MCF 10A (cell line): ENCODE measurements at regions of chr17 and their contacts with region 1.

Region 1: GRCh38 chr17:30970831-30971567 is at the start of gene RNF135:
- DNase-seq: peak; percentile 94
- H3K4me3 Mint-ChIP-seq: peak within 1 kb of the TSS; percentile 99
- H3K27ac Mint-ChIP-seq: peak within 1 kb of the TSS; percentile 99
- H3K4me1 Mint-ChIP-seq: peaks cover 11% of the 10 kb centered on the region
- H3K27me3 Mint-ChIP-seq: no peaks in the 10 kb centered on the region
- CTCF ChIP-seq: no peak
- total RNA-seq, gene RNF135: 20.1 and 31.0 TPM in 2 replicates

Region 2: GRCh38 chr17:30796016-30796415 is 175.0 kb before region 1 on chr17:
- CTCF ChIA-PET with region 1: no interaction called
- POLR2A ChIA-PET with region 1: no interaction called
- intact Hi-C with region 1: no loop called
- DNase-seq: no peak
- H3K4me3 Mint-ChIP-seq: no peak overlapping the region
- H3K27ac Mint-ChIP-seq: no peak overlapping the region
- H3K4me1 Mint-ChIP-seq: no peaks in the 10 kb centered on the region
- H3K27me3 Mint-ChIP-seq: no peaks in the 10 kb centered on the region
- CTCF ChIP-seq: no peak

Region 3: DNA sequence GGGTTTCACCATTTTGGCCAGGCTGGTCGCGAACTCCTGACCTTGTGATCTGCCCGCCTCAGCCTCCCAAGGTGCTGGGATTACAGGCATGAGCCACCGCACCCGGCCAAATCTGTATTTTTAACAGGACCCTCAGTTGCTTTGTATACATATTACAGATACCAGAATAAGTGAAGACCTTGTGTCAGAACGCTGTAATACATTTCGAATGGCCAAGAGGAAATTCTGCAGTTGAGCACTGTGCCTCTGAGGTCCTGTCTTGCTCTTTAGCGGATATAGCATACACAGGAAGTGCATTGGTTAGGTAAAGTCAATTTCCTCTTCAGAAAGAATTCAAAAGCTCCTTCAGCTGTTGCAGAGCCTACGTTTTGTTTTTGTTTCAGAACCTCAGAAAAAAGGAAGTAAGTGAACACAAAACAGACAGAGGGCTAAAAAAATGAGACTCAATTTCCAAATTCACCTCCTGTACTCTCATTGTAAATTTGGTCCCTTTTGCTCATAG is 162.2 kb before region 1 on chr17:
- CTCF ChIA-PET with region 1: no interaction called
- POLR2A ChIA-PET with region 1: no interaction called
- intact Hi-C with region 1: no loop called
- DNase-seq: no peak
- H3K4me3 Mint-ChIP-seq: no peak overlapping the region
- H3K27ac Mint-ChIP-seq: no peak overlapping the region
- H3K4me1 Mint-ChIP-seq: peaks cover 12% of the 10 kb centered on the region
- H3K27me3 Mint-ChIP-seq: no peaks in the 10 kb centered on the region
- CTCF ChIP-seq: no peak

Region 4: GRCh38 chr17:30894236-30894635 is 76.8 kb before region 1 on chr17:
- CTCF ChIA-PET with region 1: no interaction called
- POLR2A ChIA-PET with region 1: interaction called, 12 read pairs
- intact Hi-C with region 1: no loop called
- DNase-seq: no peak
- H3K4me3 Mint-ChIP-seq: no peak overlapping the region
- H3K27ac Mint-ChIP-seq: no peak overlapping the region
- H3K4me1 Mint-ChIP-seq: no peaks in the 10 kb centered on the region
- H3K27me3 Mint-ChIP-seq: no peaks in the 10 kb centered on the region
- CTCF ChIP-seq: no peak

Region 5: GRCh38 chr17:30981531-30982519 is 10.8 kb after region 1 on chr17:
- CTCF ChIA-PET with region 1: no interaction called
- POLR2A ChIA-PET with region 1: interaction called, 12 read pairs
- intact Hi-C with region 1: no loop called
- DNase-seq: peak; percentile 9
- H3K4me3 Mint-ChIP-seq: no peak overlapping the region
- H3K27ac Mint-ChIP-seq: peak overlapping the region; percentile 40
- H3K4me1 Mint-ChIP-seq: peaks cover 30% of the 10 kb centered on the region
- H3K27me3 Mint-ChIP-seq: no peaks in the 10 kb centered on the region
- CTCF ChIP-seq: no peak

Region 6: DNA sequence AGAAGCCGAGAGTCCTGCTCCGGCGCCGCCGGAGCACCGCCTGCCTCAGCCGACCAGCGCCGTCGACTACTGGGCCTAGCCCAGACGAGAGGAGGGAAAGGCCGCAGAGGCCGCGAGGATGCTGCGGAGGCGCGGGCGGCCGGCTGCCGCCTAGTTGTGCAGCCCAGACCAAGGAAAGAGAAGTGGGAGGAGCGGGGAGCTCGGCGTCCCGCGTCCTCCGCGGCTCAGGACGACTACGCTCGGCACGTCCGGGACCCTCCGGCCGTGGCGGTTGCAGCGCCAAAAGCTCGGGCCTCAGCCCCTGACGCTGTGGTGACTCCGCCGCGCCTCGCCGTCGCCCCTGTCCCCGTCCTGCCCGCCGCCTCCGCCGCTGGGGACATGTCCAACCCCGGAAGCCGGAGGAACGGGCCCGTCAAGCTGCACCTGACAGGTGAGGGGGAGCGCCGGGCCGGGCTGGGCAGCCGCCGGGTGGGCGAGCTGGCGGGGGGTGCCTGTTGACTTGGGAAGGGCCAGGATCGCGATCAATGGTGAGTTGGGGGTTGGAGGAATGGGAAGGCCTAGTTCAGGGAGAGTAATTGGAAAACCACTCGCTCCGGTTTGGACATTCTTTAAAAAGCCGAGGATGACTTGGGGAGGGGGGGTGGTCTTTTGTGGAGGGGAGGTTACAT is 37.5 kb after region 1 on chr17:
- CTCF ChIA-PET with region 1: interaction called, 4 read pairs
- POLR2A ChIA-PET with region 1: interaction called, 108 read pairs
- intact Hi-C with region 1: no loop called
- DNase-seq: peak; percentile 61
- H3K4me3 Mint-ChIP-seq: peak overlapping the region; percentile 89
- H3K27ac Mint-ChIP-seq: peak overlapping the region; percentile 98
- H3K4me1 Mint-ChIP-seq: peaks cover 16% of the 10 kb centered on the region
- H3K27me3 Mint-ChIP-seq: no peaks in the 10 kb centered on the region
- CTCF ChIP-seq: no peak

Region 7: GRCh38 chr17:31094600-31095238 is 123.7 kb after region 1 on chr17 and contains the start of gene NF1:
- CTCF ChIA-PET with region 1: no interaction called
- POLR2A ChIA-PET with region 1: interaction called, 14 read pairs
- intact Hi-C with region 1: no loop called
- DNase-seq: peak; percentile 96
- H3K4me3 Mint-ChIP-seq: peak within 1 kb of the TSS; percentile 91
- H3K27ac Mint-ChIP-seq: peak within 1 kb of the TSS; percentile 87
- H3K4me1 Mint-ChIP-seq: peaks cover 16% of the 10 kb centered on the region
- H3K27me3 Mint-ChIP-seq: no peaks in the 10 kb centered on the region
- CTCF ChIP-seq: no peak
- total RNA-seq, gene NF1: 58.5 and 60.2 TPM in 2 replicates